Naive thymus-derived CD4-positive, alpha-beta T cell (primary cell): ENCODE measurements at regions of chr3 and their contacts with region 1.

Region 1: DNA sequence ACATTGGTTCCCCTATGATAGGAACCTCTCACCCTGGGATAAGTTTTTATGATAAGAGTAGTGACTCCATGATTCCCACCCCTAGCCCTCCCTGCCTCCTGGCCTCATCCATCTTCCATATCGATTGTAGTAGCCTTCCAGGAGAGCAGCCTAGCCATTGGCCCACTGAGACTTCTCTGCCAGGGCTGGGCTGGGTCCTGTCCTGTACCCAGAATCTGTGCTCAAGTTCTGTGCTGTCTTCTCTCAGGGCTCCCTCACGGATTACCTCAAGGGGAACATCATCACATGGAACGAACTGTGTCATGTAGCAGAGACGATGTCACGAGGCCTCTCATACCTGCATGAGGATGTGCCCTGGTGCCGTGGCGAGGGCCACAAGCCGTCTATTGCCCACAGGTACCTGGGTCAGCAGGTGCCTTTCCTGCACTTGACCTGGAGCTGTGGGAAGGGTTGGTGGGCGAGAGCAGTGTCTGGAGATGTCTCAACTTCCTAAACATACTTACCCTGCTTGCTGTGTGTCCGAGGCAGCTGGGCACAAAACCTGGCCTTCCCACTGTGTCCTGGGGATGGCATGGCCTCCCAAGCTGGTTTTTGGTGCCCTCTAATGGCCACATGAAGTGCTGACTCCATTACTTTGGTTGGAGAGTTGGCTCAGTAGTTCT is 16.6 kb upstream of the EXOG start:
- DNase-seq: peak in 8 of 9 donors; percentile 30 to 63 (median 44)
- ATAC-seq: peak; percentile 79
- H3K4me3 ChIP-seq: no peak overlapping the region
- H3K4me3 Mint-ChIP-seq: no peak overlapping the region
- H3K27ac ChIP-seq: no peak overlapping the region
- H3K27ac Mint-ChIP-seq: peak overlapping the region in 4 of 9 donors; percentile 36 to 65 (median 50)
- H3K4me1 ChIP-seq: no peaks in the 10 kb centered on the region
- H3K4me1 Mint-ChIP-seq: peaks cover 0 to 6% (median 2%) of the 10 kb centered on the region in 7 donors
- H3K27me3 ChIP-seq: no peaks in the 10 kb centered on the region
- H3K27me3 Mint-ChIP-seq: no peaks in the 10 kb centered on the region

Region 2: DNA sequence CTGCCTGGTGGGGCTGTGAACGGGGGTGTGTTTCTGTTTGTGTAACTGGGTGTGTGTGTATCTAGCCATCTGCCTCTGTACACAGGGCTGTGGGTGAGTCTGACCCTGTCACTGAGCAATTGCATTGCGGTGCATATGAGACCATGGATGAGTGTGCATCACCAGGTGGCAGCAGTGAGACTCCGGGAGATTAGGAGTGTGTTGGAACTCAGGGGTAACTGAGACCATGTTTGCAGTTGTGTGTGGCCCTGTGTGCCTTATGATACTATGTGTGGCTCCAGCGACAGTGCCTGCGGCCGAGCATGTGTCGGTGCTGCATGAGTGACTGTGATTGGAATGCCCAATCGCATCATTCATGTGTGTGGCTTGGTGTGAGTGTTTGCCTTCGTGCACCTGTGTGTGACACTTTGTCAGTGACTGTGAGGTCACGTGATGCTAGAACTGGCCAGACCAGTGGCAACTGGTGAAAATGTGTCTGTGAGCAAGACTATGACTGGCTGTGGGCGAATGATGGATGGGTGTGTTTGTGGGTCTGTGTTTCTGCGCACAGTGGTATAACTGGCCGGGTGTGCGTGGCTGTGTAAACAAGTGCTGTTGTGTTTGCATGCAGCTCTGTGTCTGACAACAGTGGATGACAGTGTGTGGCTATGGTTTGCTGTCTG is 475.0 kb before region 1 on chr3:
- CTCF ChIA-PET with region 1: no interaction called
- POLR2A ChIA-PET with region 1: no interaction called
- intact Hi-C with region 1: loop called in 1 of 2 experiments (anchors 1 kb)
- DNase-seq: peak in 5 of 9 donors; percentile 29 to 46 (median 34)
- ATAC-seq: peak; percentile 64
- H3K4me3 ChIP-seq: no peak overlapping the region
- H3K4me3 Mint-ChIP-seq: no peak overlapping the region
- H3K27ac ChIP-seq: peak overlapping the region; percentile 29
- H3K27ac Mint-ChIP-seq: peak overlapping the region; percentile 1 to 83 (median 82)
- H3K4me1 ChIP-seq: no peaks in the 10 kb centered on the region
- H3K4me1 Mint-ChIP-seq: peaks cover 17 to 25% (median 22%) of the 10 kb centered on the region in 7 donors
- H3K27me3 ChIP-seq: no peaks in the 10 kb centered on the region
- H3K27me3 Mint-ChIP-seq: no peaks in the 10 kb centered on the region

Region 3: GRCh38 chr3:38257583-38257982 is 222.0 kb before region 1 on chr3:
- CTCF ChIA-PET with region 1: interaction called, 3 read pairs
- POLR2A ChIA-PET with region 1: no interaction called
- intact Hi-C with region 1: loop called in 1 of 2 experiments (anchors 10 kb)
- DNase-seq: no peak
- ATAC-seq: no peak
- H3K4me3 ChIP-seq: no peak overlapping the region
- H3K4me3 Mint-ChIP-seq: no peak overlapping the region
- H3K27ac ChIP-seq: no peak overlapping the region
- H3K27ac Mint-ChIP-seq: peak overlapping the region in 1 of 9 donors; percentile 17
- H3K4me1 ChIP-seq: no peaks in the 10 kb centered on the region
- H3K4me1 Mint-ChIP-seq: peaks cover 0 to 26% (median 4%) of the 10 kb centered on the region in 7 donors
- H3K27me3 ChIP-seq: no peaks in the 10 kb centered on the region
- H3K27me3 Mint-ChIP-seq: no peaks in the 10 kb centered on the region

Region 4: DNA sequence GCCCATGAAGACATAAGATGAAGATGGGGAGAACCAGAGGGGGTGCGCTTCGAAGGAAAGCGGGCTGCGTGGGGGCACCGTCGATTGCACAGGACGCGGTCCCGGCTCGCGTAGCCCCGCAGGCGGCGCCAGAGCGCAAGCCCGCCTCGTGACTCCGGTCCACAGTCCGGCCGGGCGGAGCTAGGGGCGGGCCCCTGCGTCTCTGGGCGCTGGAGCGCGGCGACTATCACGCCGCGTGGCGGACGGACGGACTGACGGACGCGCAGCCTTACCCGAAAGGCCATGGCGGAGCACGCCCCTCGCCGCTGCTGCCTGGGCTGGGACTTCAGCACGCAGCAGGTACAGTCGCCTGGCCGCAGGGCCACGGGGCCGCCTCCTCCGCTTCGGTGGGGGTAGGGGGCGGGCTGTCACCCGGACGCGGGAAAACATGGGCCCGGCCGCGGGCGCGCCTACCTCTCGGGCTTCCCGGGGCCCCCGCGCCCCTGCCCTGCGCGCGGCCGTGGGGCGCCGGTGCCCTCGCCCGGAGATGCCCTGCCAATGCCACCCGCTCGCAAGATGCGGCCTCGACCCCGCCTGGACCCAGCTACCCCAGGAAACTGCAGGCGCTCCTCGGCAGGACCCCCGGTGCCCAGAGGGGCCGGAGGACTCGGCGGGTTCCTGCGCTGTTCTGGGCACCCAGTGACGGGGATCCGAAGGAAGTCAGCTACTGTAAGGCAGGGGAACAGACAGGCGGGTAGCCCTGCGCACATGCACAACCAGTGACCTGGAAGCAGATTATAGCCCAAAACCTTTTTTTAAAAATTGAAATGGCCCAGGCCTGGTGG is 132.8 kb before region 1 on chr3 and contains the start of gene XYLB:
- CTCF ChIA-PET with region 1: interaction called, 60 read pairs
- POLR2A ChIA-PET with region 1: interaction called, 6 read pairs
- intact Hi-C with region 1: loop called (anchors 2 kb)
- DNase-seq: peak; percentile 48 to 89 (median 67)
- ATAC-seq: peak; percentile 99
- H3K4me3 ChIP-seq: peak within 1 kb of the TSS; percentile 62
- H3K4me3 Mint-ChIP-seq: peak within 1 kb of the TSS; percentile 71 to 91 (median 83)
- H3K27ac ChIP-seq: peak within 1 kb of the TSS; percentile 61
- H3K27ac Mint-ChIP-seq: peak within 1 kb of the TSS in 3 of 9 donors; percentile 54 to 61 (median 54)
- H3K4me1 ChIP-seq: no peaks in the 10 kb centered on the region
- H3K4me1 Mint-ChIP-seq: peaks cover 2 to 7% (median 5%) of the 10 kb centered on the region in 7 donors
- H3K27me3 ChIP-seq: no peaks in the 10 kb centered on the region
- H3K27me3 Mint-ChIP-seq: peaks cover 0 to 4% (median 0%) of the 10 kb centered on the region in 5 donors
- total RNA-seq, gene XYLB: 1.00 to 6.7 (median 2.1) TPM

Region 5: DNA sequence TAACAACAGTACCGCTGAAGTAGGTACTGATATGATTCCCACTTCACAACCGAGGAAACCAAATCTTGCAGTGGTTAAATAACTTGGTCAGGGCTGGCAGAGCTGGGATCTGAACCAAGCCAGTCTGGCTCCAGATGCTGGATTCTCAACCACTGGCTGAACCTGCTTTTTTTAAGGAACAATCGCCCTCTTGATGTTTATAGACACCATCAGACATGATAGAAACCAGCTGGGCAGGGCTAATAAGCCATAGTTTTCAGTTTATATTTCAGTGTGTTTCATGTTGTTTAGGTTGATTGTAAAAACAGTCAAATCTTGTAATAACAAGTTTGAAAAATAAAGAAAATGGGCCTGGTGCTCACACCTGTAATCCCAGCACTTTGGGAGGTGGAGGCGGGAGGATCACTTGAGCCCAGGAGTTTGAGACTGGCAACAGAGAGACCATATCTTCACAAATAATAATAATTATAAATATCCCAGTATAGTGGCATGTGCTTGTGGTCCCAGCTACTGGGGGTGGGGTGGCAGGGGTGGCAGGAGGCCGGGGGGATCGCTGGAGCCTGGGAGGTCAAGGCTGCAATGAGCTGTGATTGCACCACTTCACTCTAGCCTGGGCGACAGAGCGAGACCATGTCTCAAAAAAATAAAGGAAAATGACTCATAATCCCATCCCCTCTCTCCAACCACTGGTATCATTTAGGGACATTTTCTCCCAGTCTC is 96.2 kb before region 1 on chr3:
- CTCF ChIA-PET with region 1: no interaction called
- POLR2A ChIA-PET with region 1: no interaction called
- intact Hi-C with region 1: no loop called
- DNase-seq: no peak
- ATAC-seq: no peak
- H3K4me3 ChIP-seq: no peak overlapping the region
- H3K4me3 Mint-ChIP-seq: no peak overlapping the region
- H3K27ac ChIP-seq: no peak overlapping the region
- H3K27ac Mint-ChIP-seq: no peak overlapping the region
- H3K4me1 ChIP-seq: no peaks in the 10 kb centered on the region
- H3K4me1 Mint-ChIP-seq: peaks cover 0 to 1% (median 0%) of the 10 kb centered on the region in 7 donors
- H3K27me3 ChIP-seq: no peaks in the 10 kb centered on the region
- H3K27me3 Mint-ChIP-seq: no peaks in the 10 kb centered on the region

Region 6: GRCh38 chr3:38453075-38453912 is 26.3 kb before region 1 on chr3 and contains the start of gene ACVR2B:
- CTCF ChIA-PET with region 1: interaction called, 9 read pairs
- POLR2A ChIA-PET with region 1: interaction called, 3 read pairs
- intact Hi-C with region 1: loop called (anchors 2 kb)
- DNase-seq: peak; percentile 20 to 83 (median 58)
- ATAC-seq: peak; percentile 74
- H3K4me3 ChIP-seq: peak within 1 kb of the TSS; percentile 74
- H3K4me3 Mint-ChIP-seq: peak within 1 kb of the TSS; percentile 88 to 99 (median 97)
- H3K27ac ChIP-seq: peak within 1 kb of the TSS; percentile 60
- H3K27ac Mint-ChIP-seq: peak within 1 kb of the TSS; percentile 59 to 95 (median 91)
- H3K4me1 ChIP-seq: peaks cover 5 to 12% of the 10 kb centered on the region in 2 donors
- H3K4me1 Mint-ChIP-seq: peaks cover 7 to 32% (median 25%) of the 10 kb centered on the region in 7 donors
- H3K27me3 ChIP-seq: no peaks in the 10 kb centered on the region
- H3K27me3 Mint-ChIP-seq: peaks cover 0 to 18% (median 0%) of the 10 kb centered on the region in 5 donors
- total RNA-seq, gene ACVR2B: 3.8 to 14.0 (median 8.3) TPM

Region 7: GRCh38 chr3:38507120-38507519 is 27.6 kb after region 1 on chr3:
- CTCF ChIA-PET with region 1: no interaction called
- POLR2A ChIA-PET with region 1: no interaction called
- intact Hi-C with region 1: no loop called
- DNase-seq: no peak
- ATAC-seq: no peak
- H3K4me3 ChIP-seq: no peak overlapping the region
- H3K4me3 Mint-ChIP-seq: no peak overlapping the region
- H3K27ac ChIP-seq: no peak overlapping the region
- H3K27ac Mint-ChIP-seq: peak overlapping the region in 3 of 9 donors; percentile 37 to 72 (median 60)
- H3K4me1 ChIP-seq: no peaks in the 10 kb centered on the region
- H3K4me1 Mint-ChIP-seq: peaks cover 0 to 2% (median 0%) of the 10 kb centered on the region in 7 donors
- H3K27me3 ChIP-seq: no peaks in the 10 kb centered on the region
- H3K27me3 Mint-ChIP-seq: no peaks in the 10 kb centered on the region